Activated naive CD8-positive, alpha-beta T cell treated with anti-CD3 and anti-CD28 coated beads, Interleukin-2, amount 10 ng/mL, durations not matched to agents 7 days and 5 days (primary cell): ENCODE measurements at regions of chr4 and their contacts with region 1.

Region 1: DNA sequence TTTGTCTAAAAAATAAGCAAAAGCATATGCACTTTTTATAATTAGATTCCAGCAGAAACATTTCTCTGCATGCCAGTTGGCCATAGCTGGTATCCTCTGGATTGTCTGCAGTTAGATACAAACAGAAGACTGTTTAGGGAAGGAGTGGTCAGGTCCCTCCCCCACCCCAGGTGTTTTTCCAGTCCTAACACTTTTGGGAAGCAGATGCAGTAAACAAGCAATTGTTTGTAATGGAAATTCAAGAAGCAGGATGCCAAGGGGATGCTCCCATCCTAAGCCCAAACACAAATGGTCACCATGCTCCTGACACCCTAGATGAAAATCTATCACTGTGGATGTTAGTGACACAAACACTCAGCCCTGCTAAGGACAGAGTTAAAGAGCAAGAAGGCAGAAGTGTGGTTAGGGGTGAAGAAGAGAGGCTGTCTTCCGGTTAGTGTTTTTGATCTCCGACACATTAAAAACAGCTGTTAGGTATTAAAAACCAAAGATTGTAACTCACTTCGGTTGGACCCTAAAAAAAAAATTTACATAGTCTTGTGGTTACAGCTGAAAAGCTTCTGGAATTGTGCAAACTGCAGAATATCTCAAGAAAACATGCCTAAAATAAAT is 7.9 kb downstream of the LEF1 start:
- DNase-seq: no peak
- ATAC-seq: peak; percentile 41
- H3K4me3 Mint-ChIP-seq: peak overlapping the region; percentile 80
- H3K27ac Mint-ChIP-seq: peak overlapping the region; percentile 83
- H3K4me1 Mint-ChIP-seq: peaks cover 58% of the 10 kb centered on the region
- H3K27me3 Mint-ChIP-seq: no peaks in the 10 kb centered on the region

Region 2: GRCh38 chr4:108144451-108144850 is 16.4 kb before region 1 on chr4:
- POLR2A ChIA-PET with region 1: interaction called, 37 read pairs
- DNase-seq: peak; percentile 58
- ATAC-seq: peak; percentile 51
- H3K4me3 Mint-ChIP-seq: peak overlapping the region; percentile 76
- H3K27ac Mint-ChIP-seq: peak overlapping the region; percentile 78
- H3K4me1 Mint-ChIP-seq: peaks cover 77% of the 10 kb centered on the region
- H3K27me3 Mint-ChIP-seq: no peaks in the 10 kb centered on the region